Caco-2 (cell line): ENCODE measurements at regions of chrX and their contacts with region 1.

Region 1: DNA sequence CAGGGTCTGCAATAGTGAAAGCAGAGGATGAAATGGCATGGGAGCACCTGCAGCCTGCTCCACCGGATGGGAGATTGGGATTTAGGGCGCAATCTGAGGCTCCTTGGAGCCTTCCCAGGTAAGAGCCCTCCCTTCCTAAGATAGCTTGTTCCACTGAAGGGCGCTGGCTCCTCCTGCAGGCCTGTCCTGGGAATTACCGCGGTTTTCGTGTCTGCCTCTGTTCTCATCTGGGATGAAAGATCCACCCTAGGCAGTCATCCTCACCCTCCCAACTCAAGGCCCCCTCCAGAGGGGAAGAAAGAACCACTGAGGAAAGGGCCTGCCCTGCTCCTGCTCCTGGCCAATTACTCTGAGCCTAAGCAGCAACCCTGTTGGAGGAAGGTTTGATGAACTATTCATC is 547.5 kb downstream of the SMARCA1 start:
- DNase-seq: peak; percentile 40 to 52
- H3K4me3 ChIP-seq: no peak overlapping the region
- H3K4me3 Mint-ChIP-seq: no peak overlapping the region
- H3K27ac Mint-ChIP-seq: no peak overlapping the region
- H3K4me1 ChIP-seq: no peaks in the 10 kb centered on the region
- H3K4me1 Mint-ChIP-seq: no peaks in the 10 kb centered on the region
- H3K27me3 ChIP-seq: no peaks in the 10 kb centered on the region
- H3K27me3 Mint-ChIP-seq: no peaks in the 10 kb centered on the region
- CTCF ChIP-seq: peak; percentile 64 to 66

Region 2: DNA sequence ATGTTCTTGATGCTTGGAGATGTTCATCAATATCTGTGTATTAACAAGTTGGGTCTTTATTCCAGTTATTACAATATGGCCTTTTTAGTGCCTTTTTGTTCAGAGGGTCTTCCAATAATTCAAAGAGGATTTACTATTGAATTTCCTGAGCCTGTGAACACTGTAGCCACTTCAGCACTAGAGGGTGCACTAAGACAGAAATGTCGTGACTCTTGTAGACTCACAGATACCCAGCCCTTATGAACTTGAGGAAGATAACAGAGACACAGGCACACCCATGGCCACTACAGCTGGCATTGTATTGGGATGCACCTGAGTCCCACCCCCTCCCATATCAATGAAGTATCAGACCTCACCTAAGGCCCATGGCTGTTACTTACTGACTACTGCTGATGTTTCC is 869.1 kb before region 1 on chrX:
- CTCF ChIA-PET with region 1: no interaction called
- POLR2A ChIA-PET with region 1: no interaction called
- intact Hi-C with region 1: loop called (anchors 10 kb)
- DNase-seq: peak in 1 of 2 experiments; percentile 1
- H3K4me3 ChIP-seq: no peak overlapping the region
- H3K4me3 Mint-ChIP-seq: no peak overlapping the region
- H3K27ac Mint-ChIP-seq: no peak overlapping the region
- H3K4me1 ChIP-seq: no peaks in the 10 kb centered on the region
- H3K4me1 Mint-ChIP-seq: no peaks in the 10 kb centered on the region
- H3K27me3 ChIP-seq: no peaks in the 10 kb centered on the region
- H3K27me3 Mint-ChIP-seq: peaks cover 4% of the 10 kb centered on the region
- CTCF ChIP-seq: peak; percentile 19 to 31

Region 3: GRCh38 chrX:128460834-128461233 is 514.9 kb before region 1 on chrX:
- CTCF ChIA-PET with region 1: no interaction called
- POLR2A ChIA-PET with region 1: no interaction called
- intact Hi-C with region 1: loop called (anchors 10 kb)
- DNase-seq: no peak
- H3K4me3 ChIP-seq: no peak overlapping the region
- H3K4me3 Mint-ChIP-seq: no peak overlapping the region
- H3K27ac Mint-ChIP-seq: no peak overlapping the region
- H3K4me1 ChIP-seq: no peaks in the 10 kb centered on the region
- H3K4me1 Mint-ChIP-seq: no peaks in the 10 kb centered on the region
- H3K27me3 ChIP-seq: no peaks in the 10 kb centered on the region
- H3K27me3 Mint-ChIP-seq: peaks cover 3% of the 10 kb centered on the region
- CTCF ChIP-seq: peak in 1 of 2 experiments; percentile 1

Region 4: GRCh38 chrX:128816919-128817318 is 158.8 kb before region 1 on chrX:
- CTCF ChIA-PET with region 1: no interaction called
- POLR2A ChIA-PET with region 1: no interaction called
- intact Hi-C with region 1: loop called (anchors 5 kb)
- DNase-seq: peak in 1 of 2 experiments; percentile 2
- H3K4me3 ChIP-seq: no peak overlapping the region
- H3K4me3 Mint-ChIP-seq: no peak overlapping the region
- H3K27ac Mint-ChIP-seq: no peak overlapping the region
- H3K4me1 ChIP-seq: no peaks in the 10 kb centered on the region
- H3K4me1 Mint-ChIP-seq: no peaks in the 10 kb centered on the region
- H3K27me3 ChIP-seq: no peaks in the 10 kb centered on the region
- H3K27me3 Mint-ChIP-seq: no peaks in the 10 kb centered on the region
- CTCF ChIP-seq: peak in 1 of 2 experiments; percentile 40